ENCODE measurements at regions of chr4 and their contacts with region 1.

Region 1: DNA sequence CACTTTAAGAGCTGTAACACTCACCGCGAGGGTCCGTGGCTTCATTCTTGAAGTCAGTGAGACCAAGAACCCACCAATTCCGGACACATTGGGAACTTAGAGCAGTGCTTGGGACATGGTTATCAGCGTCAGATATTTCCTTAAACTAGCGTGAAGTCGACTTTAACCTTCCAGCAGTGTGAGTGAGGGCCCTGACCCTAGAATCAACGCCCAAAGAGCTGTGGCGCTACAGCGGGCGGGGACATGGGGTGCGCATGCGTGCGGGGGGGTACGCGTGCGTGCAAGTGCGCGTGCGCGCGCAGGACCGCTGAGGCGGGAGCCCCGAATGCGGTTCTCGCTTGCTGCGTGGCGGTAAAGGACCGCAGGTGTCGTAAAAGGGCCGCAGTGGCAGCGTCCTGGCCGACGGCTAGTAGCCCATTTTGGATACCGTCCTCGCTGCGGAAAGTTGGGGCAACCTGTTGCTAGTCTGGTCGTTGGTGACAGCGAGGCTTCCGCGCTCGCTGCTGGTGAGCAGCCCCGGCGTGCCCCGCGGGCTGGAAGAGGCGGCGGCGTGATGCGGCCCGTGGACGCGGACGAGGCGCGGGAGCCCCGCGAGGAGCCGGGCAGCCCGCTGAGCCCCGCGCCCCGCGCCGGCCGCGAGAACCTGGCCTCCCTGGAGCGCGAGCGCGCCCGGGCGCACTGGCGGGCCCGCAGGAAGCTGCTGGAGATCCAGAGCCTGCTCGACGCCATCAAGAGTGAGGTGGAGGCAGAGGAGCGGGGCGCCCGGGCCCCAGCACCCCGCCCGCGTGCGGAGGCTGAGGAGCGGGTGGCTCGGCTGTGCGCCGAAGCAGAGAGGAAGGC is 19.8 kb upstream of the S100P start:
- DNase-seq: peak; percentile 87 to 99 (median 94)
- ATAC-seq: peak; percentile 82
- H3K4me3 ChIP-seq: peak overlapping the region; percentile 64
- H3K4me3 Mint-ChIP-seq: peak overlapping the region; percentile 97
- H3K27ac ChIP-seq: peak overlapping the region; percentile 72 to 76
- H3K27ac Mint-ChIP-seq: peak overlapping the region; percentile 96
- H3K4me1 ChIP-seq: peaks cover 53% of the 10 kb centered on the region
- H3K4me1 Mint-ChIP-seq: peaks cover 50% of the 10 kb centered on the region
- H3K27me3 ChIP-seq: no peaks in the 10 kb centered on the region
- H3K27me3 Mint-ChIP-seq: no peaks in the 10 kb centered on the region
- CTCF ChIP-seq: no peak

Region 2: GRCh38 chr4:6523251-6523650 is 150.6 kb before region 1 on chr4:
- CTCF ChIA-PET with region 1: no interaction called
- POLR2A ChIA-PET with region 1: no interaction called
- intact Hi-C with region 1: no loop called
- DNase-seq: no peak
- ATAC-seq: no peak
- H3K4me3 ChIP-seq: no peak overlapping the region
- H3K4me3 Mint-ChIP-seq: no peak overlapping the region
- H3K27ac ChIP-seq: no peak overlapping the region
- H3K27ac Mint-ChIP-seq: no peak overlapping the region
- H3K4me1 ChIP-seq: no peaks in the 10 kb centered on the region
- H3K4me1 Mint-ChIP-seq: no peaks in the 10 kb centered on the region
- H3K27me3 ChIP-seq: no peaks in the 10 kb centered on the region
- H3K27me3 Mint-ChIP-seq: peaks cover 10% of the 10 kb centered on the region
- CTCF ChIP-seq: no peak

Region 3: DNA sequence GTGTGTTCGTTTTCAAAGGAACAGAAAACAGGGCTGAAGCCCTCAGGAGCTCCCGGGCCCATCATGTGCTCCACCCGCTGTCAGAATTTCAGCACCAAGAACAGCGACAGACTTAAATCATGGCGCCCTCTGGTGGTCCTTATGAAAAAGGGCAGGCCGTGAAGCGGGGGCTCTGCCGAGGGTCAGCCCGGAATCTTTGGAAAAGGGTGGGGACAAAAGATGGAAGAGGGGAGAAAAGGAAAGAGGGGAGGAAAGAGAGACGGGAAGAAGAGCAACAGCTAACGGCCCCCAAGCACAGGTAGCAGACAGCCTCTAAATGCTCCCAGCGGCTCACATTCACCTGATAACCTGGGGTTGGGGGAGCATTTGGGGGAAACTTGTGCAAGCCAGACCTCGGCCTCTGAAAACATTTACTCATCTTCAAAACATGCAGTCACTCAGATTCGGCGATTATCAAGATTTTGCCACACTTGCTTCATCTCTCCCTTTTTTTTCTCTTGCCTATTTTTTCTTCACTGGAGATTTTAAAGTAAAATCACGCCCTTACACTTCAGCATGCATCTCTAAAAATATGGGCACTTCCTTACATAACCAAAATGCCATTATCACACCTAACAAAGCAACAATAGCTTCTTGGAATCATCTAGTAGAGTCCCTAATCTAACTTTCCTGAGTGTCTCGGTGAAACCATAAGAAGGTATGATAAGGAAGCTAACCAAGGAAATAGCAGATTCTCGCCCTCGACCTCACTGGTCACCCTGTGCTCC is 127.0 kb before region 1 on chr4:
- CTCF ChIA-PET with region 1: no interaction called
- POLR2A ChIA-PET with region 1: no interaction called
- intact Hi-C with region 1: no loop called
- DNase-seq: peak in 13 of 14 experiments; percentile 12 to 83 (median 34)
- ATAC-seq: peak; percentile 68
- H3K4me3 ChIP-seq: no peak overlapping the region
- H3K4me3 Mint-ChIP-seq: no peak overlapping the region
- H3K27ac ChIP-seq: no peak overlapping the region
- H3K27ac Mint-ChIP-seq: no peak overlapping the region
- H3K4me1 ChIP-seq: no peaks in the 10 kb centered on the region
- H3K4me1 Mint-ChIP-seq: no peaks in the 10 kb centered on the region
- H3K27me3 ChIP-seq: peaks cover 23 to 29% of the 10 kb centered on the region in 2 experiments
- H3K27me3 Mint-ChIP-seq: peaks cover 62% of the 10 kb centered on the region
- CTCF ChIP-seq: peak; percentile 75

Region 4: DNA sequence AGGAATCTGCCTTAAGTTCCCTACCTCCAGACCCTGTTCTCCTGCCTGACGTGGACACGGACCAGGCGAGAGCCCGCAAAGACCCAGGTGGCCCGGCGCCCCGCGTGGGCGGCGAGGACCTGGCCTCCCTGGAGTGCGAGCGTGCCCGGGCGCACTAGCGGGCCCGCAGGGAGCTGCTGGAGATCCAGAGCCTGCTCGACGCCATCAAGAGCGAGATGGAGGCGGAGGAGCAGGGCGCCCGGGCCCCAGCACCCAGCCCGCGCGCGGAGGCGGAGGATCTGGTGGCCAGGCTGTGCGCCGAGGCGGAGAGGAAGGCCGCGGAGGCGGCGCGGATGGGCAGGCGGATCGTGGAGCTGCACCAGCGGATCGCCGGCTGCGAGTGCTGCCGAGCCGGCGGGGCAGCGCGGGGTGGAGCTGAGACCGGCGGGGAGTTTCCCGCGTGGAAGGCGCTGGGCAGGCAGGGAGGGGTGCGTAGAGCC is 15.2 kb before region 1 on chr4:
- CTCF ChIA-PET with region 1: interaction called, 23 read pairs
- POLR2A ChIA-PET with region 1: interaction called, 42 read pairs
- intact Hi-C with region 1: no loop called
- DNase-seq: peak in 13 of 14 experiments; percentile 33 to 86 (median 50)
- ATAC-seq: peak; percentile 90
- H3K4me3 ChIP-seq: peak overlapping the region; percentile 48
- H3K4me3 Mint-ChIP-seq: peak overlapping the region; percentile 79
- H3K27ac ChIP-seq: no peak overlapping the region
- H3K27ac Mint-ChIP-seq: peak overlapping the region; percentile 27
- H3K4me1 ChIP-seq: peaks cover 20% of the 10 kb centered on the region
- H3K4me1 Mint-ChIP-seq: no peaks in the 10 kb centered on the region
- H3K27me3 ChIP-seq: peaks cover under 1 to 4% of the 10 kb centered on the region in 2 experiments
- H3K27me3 Mint-ChIP-seq: peaks cover 29% of the 10 kb centered on the region
- CTCF ChIP-seq: no peak

Region 5: DNA sequence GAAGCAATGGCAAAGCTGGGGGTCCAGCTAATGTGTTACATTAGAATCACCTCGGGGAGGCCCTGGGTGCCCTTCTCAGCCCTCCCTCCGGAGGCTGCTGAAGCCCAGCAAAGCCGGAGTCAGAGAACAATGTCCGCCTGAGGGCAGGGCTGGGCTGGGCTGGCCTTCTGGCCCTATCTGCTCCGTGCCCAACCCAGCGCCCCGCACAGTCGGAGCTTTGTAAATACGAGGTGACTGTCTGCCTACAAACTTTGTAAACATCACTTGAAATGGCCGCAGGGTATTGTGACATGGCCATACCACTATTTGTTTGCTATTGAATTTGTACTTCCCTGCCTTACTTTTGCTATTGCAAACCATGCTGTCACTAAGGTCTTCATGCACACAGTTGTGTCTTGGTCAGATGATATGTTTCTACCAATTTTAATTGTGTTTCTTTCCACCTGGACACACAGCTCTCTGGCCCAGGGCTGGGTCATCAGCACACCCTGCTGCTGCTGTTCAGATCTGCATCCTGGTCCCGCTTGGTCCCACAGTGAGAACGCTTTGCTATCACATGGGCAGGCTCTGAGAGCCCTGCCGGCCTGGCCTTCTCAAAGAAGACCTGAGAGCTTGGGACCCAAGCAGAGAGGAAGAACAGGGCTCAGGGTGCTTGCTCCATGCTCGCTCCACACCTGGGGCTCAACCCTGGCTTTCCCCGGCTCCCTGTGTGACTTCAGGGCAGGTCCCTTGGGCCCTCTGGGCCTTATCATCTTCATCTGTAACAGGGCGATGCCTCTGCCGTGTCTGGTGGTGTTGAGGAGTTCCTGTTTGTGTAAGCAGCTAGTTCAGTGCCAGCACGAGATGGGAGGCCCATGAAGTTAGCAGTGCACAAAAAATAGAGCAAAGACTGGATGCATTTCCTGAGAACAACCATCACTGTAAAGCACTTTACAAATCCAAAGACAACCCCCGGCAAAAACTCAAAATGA is 22.1 kb after region 1 on chr4:
- CTCF ChIA-PET with region 1: interaction called, 39 read pairs
- POLR2A ChIA-PET with region 1: interaction called, 245 read pairs
- intact Hi-C with region 1: loop called in 1 of 2 experiments (anchors 1 kb)
- DNase-seq: peak; percentile 49 to 89 (median 68)
- ATAC-seq: peak; percentile 94
- H3K4me3 ChIP-seq: peak overlapping the region; percentile 1
- H3K4me3 Mint-ChIP-seq: peak overlapping the region; percentile 39
- H3K27ac ChIP-seq: peak overlapping the region; percentile 75 to 83
- H3K27ac Mint-ChIP-seq: peak overlapping the region; percentile 89
- H3K4me1 ChIP-seq: peaks cover 92% of the 10 kb centered on the region
- H3K4me1 Mint-ChIP-seq: peaks cover 82% of the 10 kb centered on the region
- H3K27me3 ChIP-seq: no peaks in the 10 kb centered on the region
- H3K27me3 Mint-ChIP-seq: no peaks in the 10 kb centered on the region
- CTCF ChIP-seq: no peak

Region 6: GRCh38 chr4:6716018-6716911 is 42.4 kb after region 1 on chr4 and contains the start of gene BLOC1S4:
- CTCF ChIA-PET with region 1: interaction called, 74 read pairs
- POLR2A ChIA-PET with region 1: interaction called, 221 read pairs
- intact Hi-C with region 1: loop called (anchors 1 kb)
- DNase-seq: peak; percentile 79 to 98 (median 88)
- ATAC-seq: peak; percentile 79
- H3K4me3 ChIP-seq: peak within 1 kb of the TSS; percentile 95
- H3K4me3 Mint-ChIP-seq: peak within 1 kb of the TSS; percentile 99
- H3K27ac ChIP-seq: peak within 1 kb of the TSS; percentile 82 to 85
- H3K27ac Mint-ChIP-seq: peak within 1 kb of the TSS; percentile 99
- H3K4me1 ChIP-seq: peaks cover 31% of the 10 kb centered on the region
- H3K4me1 Mint-ChIP-seq: peaks cover 39% of the 10 kb centered on the region
- H3K27me3 ChIP-seq: no peaks in the 10 kb centered on the region
- H3K27me3 Mint-ChIP-seq: no peaks in the 10 kb centered on the region
- CTCF ChIP-seq: no peak
- total RNA-seq, gene BLOC1S4: 24.6 to 27.6 TPM

Region 7: GRCh38 chr4:6909073-6909965 is 235.4 kb after region 1 on chr4 and contains the start of gene TBC1D14:
- CTCF ChIA-PET with region 1: interaction called, 3 read pairs
- POLR2A ChIA-PET with region 1: interaction called, 17 read pairs
- intact Hi-C with region 1: no loop called
- DNase-seq: peak; percentile 77 to 93 (median 84)
- ATAC-seq: peak; percentile 88
- H3K4me3 ChIP-seq: peak within 1 kb of the TSS; percentile 91
- H3K4me3 Mint-ChIP-seq: peak within 1 kb of the TSS; percentile 96
- H3K27ac ChIP-seq: peak within 1 kb of the TSS; percentile 92 to 96
- H3K27ac Mint-ChIP-seq: peak within 1 kb of the TSS; percentile 90
- H3K4me1 ChIP-seq: peaks cover 61% of the 10 kb centered on the region
- H3K4me1 Mint-ChIP-seq: peaks cover 48% of the 10 kb centered on the region
- H3K27me3 ChIP-seq: no peaks in the 10 kb centered on the region
- H3K27me3 Mint-ChIP-seq: no peaks in the 10 kb centered on the region
- CTCF ChIP-seq: no peak
- total RNA-seq, gene TBC1D14: 31.2 to 34.1 TPM

Measured in CD4-positive, alpha-beta T cell (primary cell).